ENCODE measurements at regions of chr7 and their contacts with region 1.

Region 1: GRCh38 chr7:99040104-99040958 is 103.6 kb downstream of the SMURF1 start:
- DNase-seq: peak; percentile 68
- ATAC-seq: peak; percentile 84
- H3K4me3 ChIP-seq: no peak overlapping the region
- H3K27ac ChIP-seq: peak overlapping the region; percentile 25; the same call in 1 of the 2 replicates
- H3K4me1 ChIP-seq: peaks cover 0 to 4% of the 10 kb centered on the region in 2 experiments; a peak in 1 of 4 replicates
- H3K27me3 ChIP-seq: no peaks in the 10 kb centered on the region
- CTCF ChIP-seq: peak; percentile 71 to 86 (median 78)
- POLR2A ChIP-seq: no peak
- RAD21 ChIP-seq: peak; percentile 97

Region 2: DNA sequence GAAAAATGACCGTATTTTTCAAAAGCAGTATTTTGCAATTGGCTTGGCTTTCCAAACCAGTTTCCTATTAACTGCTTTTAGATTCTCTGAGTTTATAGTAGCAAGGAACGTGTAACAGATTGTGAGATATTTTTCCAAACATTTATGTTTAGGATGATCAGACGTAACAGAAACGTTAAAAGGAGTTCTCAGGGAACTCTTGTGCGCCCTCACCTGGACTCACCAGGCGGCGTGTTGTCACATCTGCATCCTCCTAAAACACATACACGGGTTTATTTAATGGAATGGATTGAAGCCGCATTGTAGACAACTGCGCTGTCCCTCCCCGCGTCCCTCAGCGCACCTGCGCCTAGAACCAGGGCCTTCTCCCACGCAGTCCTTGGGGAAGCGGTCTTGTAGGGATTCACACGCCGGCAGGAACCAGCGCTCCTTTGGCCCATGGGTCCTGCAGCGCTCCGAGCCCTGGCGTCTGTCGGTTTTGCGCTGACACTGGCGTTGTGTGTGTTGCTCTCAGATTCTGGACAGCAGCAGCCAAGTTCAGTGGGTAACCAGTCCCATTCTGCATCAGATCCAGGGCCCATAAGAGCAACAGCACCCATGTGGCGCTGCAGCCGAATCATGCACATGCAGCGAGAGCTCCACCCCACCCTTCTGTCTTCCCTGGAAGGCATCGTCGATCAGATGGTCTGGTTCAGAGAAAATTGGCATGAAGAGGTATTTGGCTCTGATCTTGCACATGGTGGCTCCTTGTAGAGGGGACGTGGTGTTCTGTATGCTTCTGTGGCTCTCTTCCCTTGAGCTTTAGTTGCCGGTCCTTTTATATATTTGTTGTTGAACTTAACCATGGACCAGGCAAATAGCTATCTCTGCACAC is 47.1 kb before region 1 on chr7:
- CTCF ChIA-PET with region 1: no interaction called
- POLR2A ChIA-PET with region 1: no interaction called
- RAD21 ChIA-PET with region 1: no interaction called
- intact Hi-C with region 1: no loop called
- DNase-seq: no peak
- ATAC-seq: no peak; the same call in 1 of the 2 replicates
- H3K4me3 ChIP-seq: no peak overlapping the region
- H3K27ac ChIP-seq: no peak overlapping the region
- H3K4me1 ChIP-seq: no peaks in the 10 kb centered on the region
- H3K27me3 ChIP-seq: no peaks in the 10 kb centered on the region
- CTCF ChIP-seq: peak; percentile 12 to 45 (median 37); a peak in 4 of 6 replicates
- POLR2A ChIP-seq: no peak
- RAD21 ChIP-seq: peak; percentile 25; the same call in 1 of the 2 replicates

Region 3: DNA sequence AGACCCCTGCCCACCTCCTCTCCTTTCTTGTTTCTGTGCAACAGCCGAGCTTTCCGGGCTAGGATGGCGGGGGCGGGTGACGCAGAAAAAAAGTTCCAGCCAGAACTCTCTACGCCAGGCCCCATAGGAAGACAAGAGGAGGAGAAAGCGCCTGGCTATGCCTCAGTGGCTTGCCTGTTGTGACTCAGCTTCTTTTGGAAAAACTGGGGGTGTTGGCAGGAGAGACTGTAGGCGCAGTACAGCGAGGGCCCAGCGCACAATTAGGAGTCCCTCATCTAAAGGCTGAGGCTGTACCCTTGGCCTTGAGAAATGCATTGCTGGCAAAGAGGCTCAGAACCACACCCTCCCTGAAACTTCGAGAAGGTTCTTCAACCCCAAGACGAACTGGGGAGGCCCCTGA is 195.6 kb after region 1 on chr7:
- CTCF ChIA-PET with region 1: no interaction called
- POLR2A ChIA-PET with region 1: no interaction called
- RAD21 ChIA-PET with region 1: no interaction called
- intact Hi-C with region 1: loop called (anchors 2 kb)
- DNase-seq: no peak
- ATAC-seq: no peak
- H3K4me3 ChIP-seq: no peak overlapping the region
- H3K27ac ChIP-seq: no peak overlapping the region
- H3K4me1 ChIP-seq: peaks cover 0 to 10% of the 10 kb centered on the region in 2 experiments; a peak in 2 of 4 replicates
- H3K27me3 ChIP-seq: no peaks in the 10 kb centered on the region
- CTCF ChIP-seq: no peak
- POLR2A ChIP-seq: no peak
- RAD21 ChIP-seq: no peak

Region 4: DNA sequence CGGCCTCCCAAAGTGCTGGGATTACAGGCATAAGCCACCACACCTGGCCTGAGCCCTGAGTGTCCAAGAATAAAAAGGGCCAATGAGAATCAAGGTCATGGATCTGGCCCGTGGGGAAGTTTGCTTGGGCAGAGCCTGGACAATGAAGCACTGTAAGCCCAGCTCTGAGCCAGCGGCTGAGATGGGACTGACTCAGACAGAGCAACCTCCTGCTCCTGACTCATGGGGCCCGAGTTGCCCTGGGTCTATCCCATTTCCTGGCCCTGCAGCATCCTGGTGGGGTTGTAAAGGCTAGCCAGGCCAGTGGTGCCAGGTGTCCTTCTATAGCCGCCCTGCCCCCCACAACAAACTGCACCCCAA is 227.1 kb after region 1 on chr7:
- CTCF ChIA-PET with region 1: no interaction called
- POLR2A ChIA-PET with region 1: no interaction called
- RAD21 ChIA-PET with region 1: interaction called, 3 read pairs
- intact Hi-C with region 1: loop called (anchors 1 kb)
- DNase-seq: peak; percentile 85
- ATAC-seq: peak; percentile 97
- H3K4me3 ChIP-seq: peak overlapping the region in 1 of 2 experiments; percentile 7; a peak in 1 of 4 replicates
- H3K27ac ChIP-seq: no peak overlapping the region
- H3K4me1 ChIP-seq: peaks cover 13 to 39% of the 10 kb centered on the region in 2 experiments
- H3K27me3 ChIP-seq: no peaks in the 10 kb centered on the region
- CTCF ChIP-seq: no peak
- POLR2A ChIP-seq: no peak
- RAD21 ChIP-seq: no peak

Region 5: GRCh38 chr7:99312316-99313203 is 272.2 kb after region 1 on chr7:
- CTCF ChIA-PET with region 1: interaction called, 3 read pairs
- POLR2A ChIA-PET with region 1: no interaction called
- RAD21 ChIA-PET with region 1: no interaction called
- intact Hi-C with region 1: loop called (anchors 1 kb)
- DNase-seq: peak; percentile 32
- ATAC-seq: peak; percentile 81
- H3K4me3 ChIP-seq: no peak overlapping the region
- H3K27ac ChIP-seq: no peak overlapping the region
- H3K4me1 ChIP-seq: peaks cover 0 to 16% of the 10 kb centered on the region in 2 experiments; a peak in 2 of 4 replicates
- H3K27me3 ChIP-seq: no peaks in the 10 kb centered on the region
- CTCF ChIP-seq: peak; percentile 86 to 90 (median 88)
- POLR2A ChIP-seq: no peak
- RAD21 ChIP-seq: peak; percentile 96